ENCODE measurements at regions of chr1 and their contacts with region 1.

Region 1: DNA sequence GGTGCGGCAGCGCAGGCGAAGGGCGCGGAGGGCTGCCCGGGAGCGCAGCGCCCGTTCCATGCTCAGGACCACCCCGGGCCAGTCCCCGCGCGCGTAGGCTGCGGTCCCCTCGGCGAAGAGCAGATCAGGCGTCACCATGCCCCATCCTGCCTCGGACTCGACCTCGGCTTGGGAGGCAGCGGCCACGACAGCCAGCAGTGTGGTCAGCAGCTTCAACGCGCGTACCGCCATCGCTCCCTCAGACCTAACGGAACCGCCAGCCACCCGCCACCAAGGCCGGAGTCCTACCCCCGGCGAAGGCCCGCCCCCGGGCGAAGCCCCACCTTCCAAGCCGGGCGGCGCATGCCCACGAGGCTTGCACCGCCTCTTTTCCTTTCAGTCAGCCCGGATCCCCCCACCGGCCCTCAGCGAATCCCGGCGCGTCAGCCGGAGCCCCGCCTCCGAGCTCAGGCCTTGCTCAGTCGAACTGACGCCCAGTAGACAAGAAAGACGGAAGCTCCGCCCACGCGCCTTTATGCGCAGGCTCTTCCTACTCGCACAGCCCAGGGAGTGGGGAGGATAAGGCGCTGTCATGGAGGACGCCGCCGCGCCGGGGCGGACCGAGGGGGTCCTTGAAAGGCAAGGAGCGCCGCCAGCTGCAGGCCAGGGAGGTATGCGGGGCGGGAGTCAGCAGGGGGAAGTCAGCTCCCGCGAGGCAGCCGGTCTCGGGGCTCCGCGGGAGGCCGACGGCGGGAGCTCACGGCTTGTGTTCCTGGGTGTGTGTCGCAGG is at the starts of genes C1orf50 and P3H1:
- DNase-seq: peak; percentile 100
- H3K4me3 ChIP-seq: peak within 1 kb of the TSS; percentile 91 to 98 (median 94)
- H3K27ac ChIP-seq: peak within 1 kb of the TSS; percentile 90 to 95 (median 94)
- H3K4me1 ChIP-seq: peaks cover 0 to 45% (median 40%) of the 10 kb centered on the region in 4 donors
- H3K27me3 ChIP-seq: no peaks in the 10 kb centered on the region
- CTCF ChIP-seq: no peak
- EP300 ChIP-seq: no peak
- POLR2A ChIP-seq: peak; percentile 94 to 97
- total RNA-seq, gene C1orf50: 2.2 to 6.9 (median 4.2) TPM
- total RNA-seq, gene P3H1: 15.3 to 23.3 (median 19.1) TPM

Region 2: DNA sequence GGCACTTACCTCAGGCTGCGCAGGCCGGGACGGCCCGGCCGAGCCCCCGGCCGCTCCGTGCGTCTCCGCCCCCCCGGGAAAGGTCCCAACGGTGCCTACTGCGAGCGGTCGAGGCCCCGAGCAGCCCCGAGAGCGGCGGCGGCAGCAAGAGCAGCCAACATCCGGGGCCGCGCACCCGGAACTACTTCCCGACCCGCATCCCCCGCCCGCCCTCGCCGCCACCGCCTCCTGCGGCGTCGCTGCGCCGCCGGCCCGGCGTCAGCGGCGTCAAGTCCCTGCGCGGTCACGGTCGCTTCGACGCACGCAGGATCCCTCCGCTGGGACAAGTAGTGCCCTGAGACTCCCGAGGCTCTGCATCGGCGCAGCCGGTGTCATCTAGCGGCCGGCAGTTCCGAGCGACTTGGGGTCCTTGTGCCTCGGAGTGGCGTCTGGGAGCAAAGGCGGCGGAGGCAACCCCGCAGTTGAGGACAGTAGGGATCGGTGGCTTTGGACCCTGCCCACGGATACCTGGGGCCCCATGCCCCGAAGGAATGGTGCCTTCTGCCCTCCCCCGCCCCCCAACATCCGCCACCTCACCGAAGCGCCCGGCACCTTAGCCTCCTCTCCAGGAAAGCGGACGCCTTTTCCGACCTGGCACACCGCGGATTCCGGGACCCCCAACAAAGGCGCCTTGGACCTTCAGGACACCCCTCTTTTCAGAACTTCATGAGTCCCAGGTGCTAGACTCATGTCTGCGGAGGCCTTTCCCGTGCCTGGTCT is 431.7 kb before region 1 on chr1 and contains the start of gene FOXJ3:
- intact Hi-C with region 1: loop called (anchors 10 kb)
- DNase-seq: peak; percentile 95
- H3K4me3 ChIP-seq: peak within 1 kb of the TSS; percentile 80 to 97 (median 89)
- H3K27ac ChIP-seq: peak within 1 kb of the TSS; percentile 92 to 97 (median 96)
- H3K4me1 ChIP-seq: peaks cover 0 to 37% (median 32%) of the 10 kb centered on the region in 4 donors
- H3K27me3 ChIP-seq: no peaks in the 10 kb centered on the region
- CTCF ChIP-seq: no peak
- EP300 ChIP-seq: no peak
- POLR2A ChIP-seq: peak; percentile 28
- total RNA-seq, gene FOXJ3: 39.9 to 53.8 (median 47.4) TPM

Region 3: GRCh38 chr1:42681741-42682483 is 85.0 kb before region 1 on chr1 and contains the start of gene YBX1:
- intact Hi-C with region 1: loop called (anchors 2 kb)
- DNase-seq: peak; percentile 99
- H3K4me3 ChIP-seq: peak within 1 kb of the TSS; percentile 78 to 96 (median 93)
- H3K27ac ChIP-seq: peak within 1 kb of the TSS; percentile 92 to 99 (median 96)
- H3K4me1 ChIP-seq: peaks cover 0 to 54% (median 48%) of the 10 kb centered on the region in 4 donors
- H3K27me3 ChIP-seq: no peaks in the 10 kb centered on the region
- CTCF ChIP-seq: no peak
- EP300 ChIP-seq: no peak
- POLR2A ChIP-seq: peak; percentile 84 to 85
- total RNA-seq, gene YBX1: 685 to 773 (median 728) TPM

Region 4: DNA sequence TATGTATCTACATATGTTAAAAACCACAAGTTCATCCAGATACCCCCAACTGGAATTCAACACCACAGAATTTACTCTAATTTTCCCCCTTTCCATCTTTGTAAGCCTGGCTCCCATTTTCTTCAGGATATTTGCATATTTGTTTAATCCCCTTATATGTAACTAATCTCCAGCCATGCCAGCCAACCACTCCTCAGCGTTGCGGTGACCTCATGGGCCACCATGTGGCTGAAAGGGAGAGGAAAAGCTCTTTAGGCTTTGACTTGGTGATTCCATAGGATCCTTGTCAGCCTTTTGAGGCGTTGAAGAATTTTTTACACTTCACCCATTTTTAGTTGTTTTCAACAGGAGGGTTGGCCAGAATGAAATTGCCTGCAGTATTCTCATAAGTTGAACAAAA is 36.9 kb before region 1 on chr1:
- intact Hi-C with region 1: no loop called
- DNase-seq: no peak
- H3K4me3 ChIP-seq: no peak overlapping the region
- H3K27ac ChIP-seq: no peak overlapping the region
- H3K4me1 ChIP-seq: no peaks in the 10 kb centered on the region
- H3K27me3 ChIP-seq: no peaks in the 10 kb centered on the region
- CTCF ChIP-seq: no peak
- EP300 ChIP-seq: no peak
- POLR2A ChIP-seq: no peak

Region 5: DNA sequence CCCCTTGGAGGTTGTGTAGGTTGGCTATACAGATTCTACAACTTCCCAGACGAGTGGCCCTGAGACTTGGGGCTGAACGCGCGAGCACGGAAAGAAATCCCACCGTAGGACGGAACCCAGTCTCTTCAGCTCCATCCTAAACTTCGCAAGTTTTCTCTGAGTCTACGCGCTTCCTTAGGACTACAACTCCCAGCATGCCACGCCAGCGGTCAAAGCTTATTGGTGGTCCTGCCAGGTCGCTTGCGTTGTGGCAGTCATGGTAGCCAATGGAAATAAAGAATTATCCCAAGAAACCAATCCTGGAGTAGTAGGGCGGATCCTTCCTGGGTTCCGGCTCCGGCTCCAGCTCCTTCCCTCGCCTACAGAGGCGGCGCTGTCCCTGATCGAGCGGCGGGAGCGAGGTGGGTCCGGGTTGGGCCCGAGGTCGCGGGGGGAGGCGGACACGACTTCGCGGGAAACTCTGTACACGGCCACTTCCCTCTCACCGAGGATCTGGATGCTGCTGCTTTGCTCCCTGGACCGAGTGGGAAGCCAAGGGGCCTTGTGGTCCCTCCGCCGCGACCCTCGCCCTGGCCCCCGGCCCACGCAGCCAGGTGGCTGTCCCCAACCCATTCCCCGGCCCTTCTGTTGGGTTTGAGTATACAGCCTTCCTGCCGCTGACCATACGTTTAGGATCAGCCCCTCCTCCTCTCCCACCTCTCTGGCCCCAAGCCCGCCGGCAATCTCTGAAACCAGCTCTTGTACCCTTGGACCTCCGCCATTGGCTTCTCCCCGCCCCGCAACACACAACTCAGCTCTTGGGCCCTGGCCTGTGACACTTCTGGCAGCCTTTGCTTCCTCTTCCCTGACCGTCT is 79.6 kb after region 1 on chr1 and contains the start of gene ZNF691:
- intact Hi-C with region 1: loop called (anchors 2 kb)
- DNase-seq: peak; percentile 98
- H3K4me3 ChIP-seq: peak within 1 kb of the TSS; percentile 65 to 99 (median 90)
- H3K27ac ChIP-seq: peak within 1 kb of the TSS; percentile 85 to 90 (median 87)
- H3K4me1 ChIP-seq: peaks cover 0 to 23% (median 9%) of the 10 kb centered on the region in 4 donors
- H3K27me3 ChIP-seq: no peaks in the 10 kb centered on the region
- CTCF ChIP-seq: peak in 2 of 4 experiments; percentile 15 to 39
- EP300 ChIP-seq: no peak
- POLR2A ChIP-seq: peak; percentile 27 to 39
- total RNA-seq, gene ZNF691: 8.3 to 20.7 (median 15.2) TPM

Region 6: GRCh38 chr1:42958488-42959319 is 191.8 kb after region 1 on chr1 and contains the start of gene SLC2A1:
- intact Hi-C with region 1: loop called (anchors 2 kb)
- DNase-seq: peak; percentile 95
- H3K4me3 ChIP-seq: peak within 1 kb of the TSS; percentile 70 to 85 (median 78)
- H3K27ac ChIP-seq: peak within 1 kb of the TSS; percentile 90 to 92 (median 91)
- H3K4me1 ChIP-seq: peaks cover 0 to 51% (median 37%) of the 10 kb centered on the region in 4 donors
- H3K27me3 ChIP-seq: no peaks in the 10 kb centered on the region
- CTCF ChIP-seq: no peak
- EP300 ChIP-seq: no peak
- POLR2A ChIP-seq: peak; percentile 78 to 91
- total RNA-seq, gene SLC2A1: 7.7 to 33.5 (median 15.3) TPM

Region 7: GRCh38 chr1:43171876-43172526 is 405.1 kb after region 1 on chr1 and contains the starts of genes CFAP57 and EBNA1BP2:
- intact Hi-C with region 1: loop called (anchors 2 kb)
- DNase-seq: peak; percentile 95
- H3K4me3 ChIP-seq: peak within 1 kb of the TSS; percentile 57 to 97 (median 88)
- H3K27ac ChIP-seq: peak within 1 kb of the TSS; percentile 62 to 76 (median 69)
- H3K4me1 ChIP-seq: peaks cover 0 to 20% (median 16%) of the 10 kb centered on the region in 4 donors
- H3K27me3 ChIP-seq: peaks cover 0 to 5% (median 0%) of the 10 kb centered on the region in 3 donors
- CTCF ChIP-seq: no peak
- EP300 ChIP-seq: no peak
- POLR2A ChIP-seq: no peak
- total RNA-seq, gene CFAP57: under 0.01 TPM in 1 of 4 donors, not detected in the others
- total RNA-seq, gene EBNA1BP2: 34.9 to 48.7 (median 41.6) TPM

Measured in sigmoid colon (tissue), 7 donors.